ENCODE measurements at regions of chr5 and their contacts with region 1.

Region 1: GRCh38 chr5:29230591-29230990 is 1962.9 kb upstream of the CDH6 start:
- DNase-seq: no peak
- H3K4me3 Mint-ChIP-seq: no peak overlapping the region
- H3K27ac Mint-ChIP-seq: no peak overlapping the region
- H3K4me1 Mint-ChIP-seq: no peaks in the 10 kb centered on the region
- H3K27me3 Mint-ChIP-seq: no peaks in the 10 kb centered on the region
- CTCF ChIP-seq: no peak

Region 2: DNA sequence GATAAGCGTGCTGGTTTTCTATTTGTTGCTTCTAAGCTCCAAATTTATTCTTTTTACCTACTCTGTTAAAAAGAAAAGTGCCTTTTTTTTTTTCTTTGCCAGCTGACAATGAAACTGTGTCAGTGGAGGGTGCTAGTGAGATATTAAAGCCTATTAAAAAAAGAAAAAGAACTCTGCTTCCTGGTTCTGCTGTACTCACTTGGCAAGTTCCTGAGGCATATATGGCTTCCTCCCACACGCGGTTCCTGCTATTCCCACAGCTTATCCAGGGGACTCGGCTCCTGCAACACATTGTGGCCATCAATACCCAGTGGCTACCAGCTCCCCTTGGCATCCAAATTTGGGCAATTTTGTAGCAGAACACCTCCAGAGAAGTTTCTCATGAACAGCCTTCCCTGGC is 214.5 kb before region 1 on chr5:
- CTCF ChIA-PET with region 1: no interaction called
- intact Hi-C with region 1: loop called (anchors 5 kb)
- DNase-seq: peak; percentile 4
- H3K4me3 Mint-ChIP-seq: no peak overlapping the region
- H3K27ac Mint-ChIP-seq: no peak overlapping the region
- H3K4me1 Mint-ChIP-seq: peaks cover 11% of the 10 kb centered on the region
- H3K27me3 Mint-ChIP-seq: no peaks in the 10 kb centered on the region
- CTCF ChIP-seq: no peak

Measured in Calu3 (cell line).